Activated T-helper 2 cell treated with anti-CD3 and anti-CD28 coated beads, Interferon-gamma antibody, Interleukin-2, Interleukin-4, amounts not matched to agents 10 μg/mL and 5 μg/mL and 100 μg/mL, durations not matched to agents 14 hours and 24 hours and 36 hours (primary cell): ENCODE measurements at regions of chr10 and their contacts with region 1.

Region 1: DNA sequence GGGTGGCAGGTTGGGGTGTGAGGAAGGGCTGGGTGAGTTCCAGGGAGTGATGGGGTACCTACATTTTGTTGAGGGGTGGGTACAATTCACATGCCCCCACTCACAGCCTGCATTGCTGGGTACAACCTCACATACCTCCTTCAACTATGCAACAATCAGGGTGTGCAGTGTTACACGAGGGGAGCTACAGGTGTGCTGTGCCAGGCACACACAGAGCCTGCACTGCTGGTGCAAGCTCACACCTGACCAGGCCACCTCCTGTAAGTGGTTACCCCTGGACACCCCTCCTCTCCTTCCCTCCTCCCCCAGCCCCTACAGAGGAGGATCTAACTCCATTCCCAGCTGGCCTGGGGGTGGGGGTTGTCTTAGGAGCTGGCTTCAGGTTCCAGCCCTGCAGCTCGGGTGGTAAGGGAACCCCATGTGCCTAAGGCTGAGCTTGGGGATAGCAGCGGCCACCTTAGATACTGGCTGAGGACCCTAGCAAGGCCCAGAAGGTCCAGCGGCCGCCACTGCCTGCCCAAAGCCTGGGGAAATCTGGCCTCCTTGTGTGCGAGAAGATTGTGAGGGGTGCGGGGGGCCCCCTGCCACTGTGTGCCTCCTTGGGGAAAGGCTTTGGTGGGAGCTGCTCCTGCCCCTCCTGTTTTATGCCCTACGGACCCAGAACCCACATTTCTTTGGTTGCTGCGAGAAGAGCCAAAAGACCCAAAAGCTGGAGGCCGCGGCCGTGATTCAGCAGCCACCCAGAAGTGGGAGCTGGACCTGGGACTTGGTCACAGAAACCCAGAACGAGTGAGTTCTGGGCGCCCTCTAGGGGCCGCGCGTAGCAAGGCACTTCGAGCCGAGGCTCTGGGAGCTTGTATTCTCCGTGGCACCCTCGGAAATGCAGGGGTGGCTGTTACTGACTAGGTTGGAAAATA is 10.8 kb downstream of the TLX1 start:
- DNase-seq: peak; percentile 66
- H3K4me3 Mint-ChIP-seq: no peak overlapping the region
- H3K27ac Mint-ChIP-seq: no peak overlapping the region
- H3K4me1 Mint-ChIP-seq: peaks cover 6% of the 10 kb centered on the region
- H3K27me3 Mint-ChIP-seq: peaks cover 86% of the 10 kb centered on the region

Region 2: DNA sequence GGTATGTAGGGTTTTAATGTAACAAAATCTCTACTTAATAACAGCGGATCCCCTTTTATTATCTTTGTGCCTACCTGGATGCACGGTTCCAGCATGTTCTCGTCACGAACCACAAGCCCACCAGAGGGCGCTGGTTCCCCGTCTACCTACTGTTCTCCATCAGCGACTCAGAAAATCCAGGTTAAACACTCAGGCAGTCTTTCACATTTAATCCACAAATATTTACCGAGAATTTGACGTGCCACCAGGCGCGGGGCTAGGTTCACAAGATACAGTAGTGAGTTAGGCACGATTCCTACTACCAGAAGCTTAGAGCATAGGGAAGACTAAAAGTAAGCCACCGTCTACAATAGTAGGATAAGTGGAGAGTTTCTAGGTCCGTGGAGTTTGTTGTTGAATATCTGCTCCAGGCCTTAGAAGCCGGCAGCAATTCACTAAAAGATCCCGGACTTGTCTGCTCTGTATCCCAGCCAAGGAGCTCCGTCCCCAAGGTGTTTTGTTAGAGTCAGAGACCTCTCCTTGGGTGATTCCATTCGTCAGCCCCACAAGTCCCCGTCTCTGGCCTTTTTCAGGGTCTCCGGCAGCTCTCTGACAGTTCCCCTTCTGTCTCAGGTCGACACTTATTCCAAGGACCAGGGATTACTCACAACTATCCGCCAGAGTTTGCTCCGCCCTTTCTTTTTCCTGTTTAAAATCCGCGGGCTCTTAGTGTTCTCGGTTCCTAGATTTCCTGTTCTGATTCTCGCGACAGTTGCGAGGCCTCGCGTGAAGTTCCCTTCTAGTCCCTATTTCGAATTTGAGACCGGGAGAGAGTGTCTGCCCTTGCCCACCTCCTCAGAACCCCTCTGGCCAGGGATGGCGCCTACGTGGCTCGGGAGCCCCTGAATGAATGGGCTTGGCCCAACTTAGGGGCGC is 81.6 kb before region 1 on chr10:
- intact Hi-C with region 1: loop called (anchors 5 kb)
- DNase-seq: peak; percentile 87
- H3K4me3 Mint-ChIP-seq: peak overlapping the region; percentile 95
- H3K27ac Mint-ChIP-seq: peak overlapping the region; percentile 85
- H3K4me1 Mint-ChIP-seq: peaks cover 27% of the 10 kb centered on the region
- H3K27me3 Mint-ChIP-seq: peaks cover 23% of the 10 kb centered on the region

Region 3: GRCh38 chr10:101095542-101096213 is 46.2 kb before region 1 on chr10:
- intact Hi-C with region 1: loop called (anchors 1 kb)
- DNase-seq: peak; percentile 62
- H3K4me3 Mint-ChIP-seq: no peak overlapping the region
- H3K27ac Mint-ChIP-seq: no peak overlapping the region
- H3K4me1 Mint-ChIP-seq: no peaks in the 10 kb centered on the region
- H3K27me3 Mint-ChIP-seq: peaks cover 18% of the 10 kb centered on the region

Region 4: GRCh38 chr10:101380353-101381017 is 238.6 kb after region 1 on chr10:
- intact Hi-C with region 1: no loop called
- DNase-seq: no peak
- H3K4me3 Mint-ChIP-seq: no peak overlapping the region
- H3K27ac Mint-ChIP-seq: peak overlapping the region; percentile 69
- H3K4me1 Mint-ChIP-seq: peaks cover 20% of the 10 kb centered on the region
- H3K27me3 Mint-ChIP-seq: no peaks in the 10 kb centered on the region